ENCODE measurements at regions of chr6 and their contacts with region 1.

Region 1: DNA sequence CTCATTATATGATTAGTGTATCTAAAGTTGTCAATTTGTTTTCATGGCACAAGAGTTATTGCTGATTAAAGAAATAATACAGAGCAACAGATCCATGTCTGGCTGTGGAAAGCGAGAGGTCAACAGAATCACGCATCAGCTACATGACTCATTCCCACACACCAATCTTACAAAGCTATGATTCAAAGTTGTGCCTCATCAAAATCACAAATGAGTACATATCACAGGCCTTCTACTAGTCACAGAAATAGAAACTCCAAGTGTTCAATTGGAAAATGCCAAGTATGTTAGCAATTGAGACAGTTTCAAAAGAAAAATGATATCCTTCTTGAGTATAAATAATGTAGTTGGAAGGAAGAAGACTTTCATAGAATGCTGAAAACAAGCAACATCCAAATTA is 57.8 kb upstream of the NKAIN2 start:
- DNase-seq: no peak
- ATAC-seq: no peak
- H3K4me3 ChIP-seq: no peak overlapping the region
- H3K27ac ChIP-seq: no peak overlapping the region
- H3K4me1 ChIP-seq: no peaks in the 10 kb centered on the region
- H3K27me3 ChIP-seq: no peaks in the 10 kb centered on the region; the same call in 1 of the 2 replicates
- CTCF ChIP-seq: no peak
- POLR2A ChIP-seq: no peak
- RAD21 ChIP-seq: no peak

Region 2: GRCh38 chr6:122956376-122956775 is 789.5 kb before region 1 on chr6:
- CTCF ChIA-PET with region 1: no interaction called
- POLR2A ChIA-PET with region 1: no interaction called
- RAD21 ChIA-PET with region 1: no interaction called
- intact Hi-C with region 1: loop called (anchors 10 kb)
- DNase-seq: no peak
- ATAC-seq: no peak
- H3K4me3 ChIP-seq: no peak overlapping the region
- H3K27ac ChIP-seq: no peak overlapping the region
- H3K4me1 ChIP-seq: no peaks in the 10 kb centered on the region
- H3K27me3 ChIP-seq: 0 out of 2 replicates have a peak, but pooled peaks cover 4% of the 10 kb centered on the region
- CTCF ChIP-seq: no peak
- POLR2A ChIP-seq: no peak
- RAD21 ChIP-seq: no peak

Region 3: GRCh38 chr6:123777563-123777962 is 31.7 kb after region 1 on chr6:
- CTCF ChIA-PET with region 1: no interaction called
- POLR2A ChIA-PET with region 1: no interaction called
- RAD21 ChIA-PET with region 1: no interaction called
- intact Hi-C with region 1: no loop called
- DNase-seq: no peak
- ATAC-seq: no peak
- H3K4me3 ChIP-seq: no peak overlapping the region
- H3K27ac ChIP-seq: no peak overlapping the region
- H3K4me1 ChIP-seq: no peaks in the 10 kb centered on the region
- H3K27me3 ChIP-seq: peaks cover 19% of the 10 kb centered on the region
- CTCF ChIP-seq: peak in 2 of 3 experiments; percentile 5 to 31; a peak in 2 of 6 replicates
- POLR2A ChIP-seq: no peak
- RAD21 ChIP-seq: peak; percentile 40; the same call in 1 of the 2 replicates

Measured in HCT116 (cell line).